Dendritic cell treated with granulocyte-macrophage colony-stimulating factor and Interleukin-4, amounts not matched to agents 40 ng/mL and 50 ng/mL, for 4 days (primary cell): ENCODE measurements at regions of chr1 and their contacts with region 1.

Region 1: DNA sequence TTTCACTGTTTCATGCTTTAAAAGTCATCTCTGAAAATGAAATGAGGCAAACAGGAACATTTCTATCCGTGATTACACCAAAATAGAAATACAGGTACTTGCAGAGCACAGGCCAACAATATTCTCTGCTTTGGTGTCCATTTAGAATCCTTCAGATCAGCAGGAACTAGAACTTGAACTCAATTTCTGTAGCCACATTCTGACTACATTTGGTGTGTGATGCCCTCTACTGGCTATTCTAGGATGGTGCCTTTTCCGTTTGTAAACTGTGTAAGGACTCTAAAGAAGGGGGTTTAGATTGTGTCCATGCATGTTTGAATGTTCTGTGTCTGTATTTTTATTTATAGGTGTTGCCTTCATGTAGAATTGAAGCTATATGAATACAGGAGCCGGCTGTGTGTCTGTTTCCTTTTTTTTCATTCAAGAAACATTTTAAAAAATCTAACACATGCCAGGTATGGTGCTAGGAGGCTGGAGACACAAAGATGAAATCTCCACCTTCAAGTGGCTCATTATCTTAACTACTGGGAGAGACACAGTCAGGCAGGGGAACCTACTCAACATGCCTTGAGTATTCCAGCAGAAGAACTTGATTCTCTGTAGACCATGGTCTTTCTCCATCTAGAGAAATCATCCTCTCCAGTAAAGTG is 7.6 kb upstream of the ZNF326 start:
- H3K4me3 Mint-ChIP-seq: no peak overlapping the region
- H3K27ac Mint-ChIP-seq: no peak overlapping the region
- H3K4me1 Mint-ChIP-seq: peaks cover 11% of the 10 kb centered on the region
- H3K27me3 Mint-ChIP-seq: no peaks in the 10 kb centered on the region

Region 2: DNA sequence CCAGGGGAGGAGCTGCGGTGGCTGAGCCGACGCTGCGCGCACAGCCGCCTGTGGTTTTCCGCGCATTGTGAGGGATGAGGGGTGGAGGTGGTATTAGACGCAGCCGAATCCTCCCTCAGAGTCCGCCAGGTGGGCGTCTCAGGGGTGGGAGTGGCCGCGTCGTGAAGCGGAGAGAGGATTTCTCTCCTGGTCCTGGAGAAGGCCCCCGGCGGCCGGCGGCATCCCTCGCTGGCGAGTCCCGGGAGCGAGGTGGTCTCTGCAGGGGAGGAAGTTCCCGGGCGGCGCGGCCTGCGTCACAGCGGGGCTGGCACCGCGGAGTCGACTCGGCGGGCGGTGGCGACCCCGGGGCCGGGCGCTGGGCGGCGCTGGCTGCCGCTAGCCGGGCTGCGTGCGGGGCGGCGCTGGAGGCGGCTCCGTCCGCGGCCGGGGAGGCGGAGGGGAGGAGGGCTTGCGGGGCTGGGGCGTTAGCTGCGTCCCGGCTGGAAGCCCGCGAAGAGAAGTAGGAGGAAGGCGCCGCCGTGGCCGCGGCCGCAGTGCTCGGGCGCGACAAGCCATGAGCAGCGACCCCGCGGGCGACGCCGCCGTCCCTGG is 354.5 kb before region 1 on chr1 and contains the start of gene LRRC8C:
- intact Hi-C with region 1: loop called (anchors 10 kb)
- H3K4me3 Mint-ChIP-seq: peak within 1 kb of the TSS; percentile 85
- H3K27ac Mint-ChIP-seq: peak within 1 kb of the TSS; percentile 90
- H3K4me1 Mint-ChIP-seq: peaks cover 48% of the 10 kb centered on the region
- H3K27me3 Mint-ChIP-seq: no peaks in the 10 kb centered on the region

Region 3: GRCh38 chr1:89804642-89805237 is 182.6 kb before region 1 on chr1:
- intact Hi-C with region 1: loop called (anchors 1 kb)
- H3K4me3 Mint-ChIP-seq: no peak overlapping the region
- H3K27ac Mint-ChIP-seq: no peak overlapping the region
- H3K4me1 Mint-ChIP-seq: peaks cover 20% of the 10 kb centered on the region
- H3K27me3 Mint-ChIP-seq: peaks cover 1% of the 10 kb centered on the region

Region 4: DNA sequence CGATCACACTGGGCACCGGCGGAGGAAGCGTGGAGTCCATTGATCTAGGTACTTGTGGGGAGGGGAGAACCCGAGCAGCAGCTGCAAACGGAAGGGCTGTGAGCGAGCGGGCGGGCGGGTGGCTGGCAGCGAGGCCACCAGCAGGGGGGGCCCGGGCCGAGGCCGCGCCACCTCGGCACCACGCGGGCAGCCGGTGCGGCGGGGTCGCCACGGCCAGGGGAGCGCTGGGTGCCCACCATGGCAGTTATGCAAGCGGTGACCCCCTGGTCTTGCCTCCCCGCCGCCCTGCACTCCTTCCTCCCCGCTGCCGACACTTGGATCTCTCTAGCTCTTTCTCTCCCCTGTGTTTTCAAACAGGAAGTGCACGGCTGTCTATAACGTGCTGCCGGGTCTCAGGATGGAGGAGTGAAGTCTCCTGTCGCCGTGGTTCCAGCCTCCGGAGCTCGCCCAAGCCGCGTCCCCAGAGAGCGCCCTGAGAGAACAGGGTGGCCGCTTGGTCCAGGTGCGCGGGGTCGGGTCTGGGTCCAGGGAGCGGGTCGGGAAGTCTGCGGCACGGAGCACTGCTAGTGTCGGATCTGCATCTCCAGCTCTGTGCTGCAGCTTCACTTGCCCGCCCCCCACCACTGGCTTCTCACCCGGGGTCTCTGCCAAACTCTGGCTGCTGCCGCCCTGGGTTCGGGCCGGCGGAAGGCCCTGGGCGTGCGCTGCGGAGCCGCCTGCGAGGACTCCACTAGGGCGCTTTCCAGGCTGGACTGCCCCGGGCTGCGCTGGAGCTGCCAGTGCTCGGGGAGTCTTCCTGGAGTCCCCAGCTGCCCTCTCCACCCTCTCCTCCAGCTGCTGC is 143.8 kb before region 1 on chr1:
- intact Hi-C with region 1: loop called (anchors 2 kb)
- H3K4me3 Mint-ChIP-seq: peak overlapping the region; percentile 90
- H3K27ac Mint-ChIP-seq: peak overlapping the region; percentile 86
- H3K4me1 Mint-ChIP-seq: peaks cover 34% of the 10 kb centered on the region
- H3K27me3 Mint-ChIP-seq: no peaks in the 10 kb centered on the region

Region 5: GRCh38 chr1:90000934-90001676 is 13.8 kb after region 1 on chr1:
- intact Hi-C with region 1: no loop called
- H3K4me3 Mint-ChIP-seq: no peak overlapping the region
- H3K27ac Mint-ChIP-seq: peak overlapping the region; percentile 2
- H3K4me1 Mint-ChIP-seq: peaks cover 44% of the 10 kb centered on the region
- H3K27me3 Mint-ChIP-seq: no peaks in the 10 kb centered on the region